CD4-positive, alpha-beta memory T cell (primary cell): ENCODE measurements at regions of chr10 and their contacts with region 1.

Region 1: DNA sequence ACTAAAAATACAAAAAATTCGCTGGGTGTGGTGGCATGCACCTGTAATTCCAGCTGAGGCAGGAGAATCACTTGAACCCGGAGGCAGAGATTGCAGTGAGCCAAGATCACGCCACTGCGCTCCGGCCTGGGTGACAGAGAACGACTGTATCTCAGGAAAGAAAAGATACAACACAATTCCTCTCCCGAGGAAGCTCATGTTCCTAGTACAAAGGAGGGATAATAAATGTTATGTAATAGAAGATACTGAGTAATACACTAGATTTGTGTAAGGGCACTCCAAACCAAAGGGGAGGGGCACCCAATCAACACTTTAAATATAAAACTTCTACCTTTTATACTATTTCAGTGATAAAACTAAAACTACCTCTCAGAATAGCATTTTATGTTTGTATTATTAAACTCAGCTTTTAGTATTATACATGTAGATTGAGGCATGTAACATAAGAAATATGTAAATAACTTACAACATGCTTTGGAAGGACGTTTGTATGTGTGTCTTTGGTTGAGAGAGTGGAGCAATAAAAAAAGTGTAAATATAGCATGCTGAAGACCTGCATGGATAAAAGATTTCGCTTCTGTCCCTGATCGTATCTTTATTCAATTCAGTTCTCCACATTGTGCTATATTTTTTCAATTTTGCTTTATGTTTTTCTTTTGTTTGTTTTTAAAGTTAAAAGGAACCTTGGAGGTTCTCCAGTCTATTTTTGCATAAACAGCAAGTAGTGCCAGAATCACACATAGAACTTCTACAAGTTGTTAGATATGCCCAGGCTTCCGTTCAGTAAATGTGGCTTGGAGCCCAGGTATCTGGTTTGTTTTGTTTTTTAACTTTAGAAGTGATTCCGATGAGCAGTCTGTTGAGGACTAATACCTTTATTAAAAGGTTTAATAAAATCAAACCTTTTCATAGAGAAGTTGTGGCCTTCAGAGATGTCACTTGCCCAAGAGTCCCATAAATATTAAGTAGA is 71.9 kb downstream of the WAC start:
- DNase-seq: no peak
- H3K4me3 ChIP-seq: no peak overlapping the region
- H3K4me3 Mint-ChIP-seq: no peak overlapping the region
- H3K27ac ChIP-seq: no peak overlapping the region
- H3K27ac Mint-ChIP-seq: peak overlapping the region in 2 of 7 donors; percentile 17 to 55
- H3K4me1 ChIP-seq: peaks cover 20% of the 10 kb centered on the region
- H3K4me1 Mint-ChIP-seq: peaks cover 29 to 66% (median 48%) of the 10 kb centered on the region in 4 donors
- H3K27me3 ChIP-seq: no peaks in the 10 kb centered on the region
- H3K27me3 Mint-ChIP-seq: no peaks in the 10 kb centered on the region

Region 2: DNA sequence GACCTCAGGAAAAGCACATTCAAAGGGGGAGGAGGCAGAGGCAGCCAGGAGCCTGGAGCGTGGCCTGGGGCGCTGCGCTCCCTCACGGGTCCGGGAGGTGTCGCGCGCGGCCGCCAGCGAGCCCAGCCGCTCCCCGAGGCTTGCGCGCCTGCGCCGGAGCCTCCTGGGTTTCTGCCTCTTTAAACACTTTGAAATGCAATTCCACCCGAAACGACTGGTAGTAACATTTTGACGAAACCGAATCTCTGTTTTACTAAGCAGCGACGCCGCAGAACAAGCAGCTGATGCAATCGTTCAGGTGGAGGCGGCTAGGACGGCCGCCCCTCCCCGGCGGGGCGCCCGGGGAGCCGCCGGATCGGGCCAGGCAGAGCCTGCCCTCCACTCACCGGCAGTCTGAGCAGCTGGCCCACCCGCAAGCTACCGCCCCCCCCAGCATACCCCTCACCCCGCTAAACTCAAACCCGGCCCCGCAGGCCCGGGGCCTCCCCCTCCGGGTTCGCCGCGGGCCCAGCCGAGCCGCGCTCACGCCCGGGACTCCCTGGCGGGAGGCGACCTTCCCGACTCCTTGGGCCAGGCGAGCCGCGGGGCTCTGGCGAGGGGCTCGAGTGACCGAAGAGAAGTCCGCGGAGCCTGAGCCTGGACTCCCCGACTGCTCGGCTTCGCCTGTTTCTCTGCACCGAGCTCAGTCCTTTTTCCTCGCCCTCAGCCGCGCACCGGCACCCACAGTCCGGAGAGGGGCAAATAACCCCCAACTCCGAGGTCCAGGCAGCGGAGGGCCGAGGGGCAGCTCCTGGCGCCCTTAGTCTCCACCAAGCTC is 862.4 kb before region 1 on chr10:
- CTCF ChIA-PET with region 1: no interaction called
- POLR2A ChIA-PET with region 1: no interaction called
- intact Hi-C with region 1: loop called (anchors 5 kb)
- DNase-seq: peak; percentile 77 to 82 (median 80)
- H3K4me3 ChIP-seq: peak overlapping the region; percentile 22 to 68
- H3K4me3 Mint-ChIP-seq: peak overlapping the region; percentile 82 to 96 (median 89)
- H3K27ac ChIP-seq: no peak overlapping the region
- H3K27ac Mint-ChIP-seq: peak overlapping the region in 1 of 7 donors; percentile 57
- H3K4me1 ChIP-seq: peaks cover 56% of the 10 kb centered on the region
- H3K4me1 Mint-ChIP-seq: peaks cover 23 to 47% (median 35%) of the 10 kb centered on the region in 4 donors
- H3K27me3 ChIP-seq: peaks cover 52% of the 10 kb centered on the region
- H3K27me3 Mint-ChIP-seq: peaks cover 45 to 48% of the 10 kb centered on the region in 2 donors

Region 3: DNA sequence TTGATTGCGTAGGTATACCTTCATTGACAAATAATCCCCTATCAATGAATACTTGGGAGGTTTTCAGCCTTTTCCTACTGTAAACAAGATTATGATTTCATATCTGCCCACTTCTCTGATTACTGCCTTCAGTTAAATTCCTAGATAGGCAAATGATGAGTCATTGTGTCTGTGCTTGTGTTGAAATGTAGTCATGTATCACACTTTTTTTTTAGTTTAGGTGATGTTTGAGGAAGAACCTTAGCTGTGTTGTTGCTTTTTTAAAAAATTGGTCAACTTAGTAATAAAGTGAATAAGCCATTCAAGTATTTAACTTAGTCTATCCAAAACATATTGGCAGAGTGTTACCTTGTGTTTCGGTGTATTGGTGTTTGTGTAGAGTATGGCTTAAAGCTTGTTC is 11.9 kb before region 1 on chr10:
- CTCF ChIA-PET with region 1: no interaction called
- POLR2A ChIA-PET with region 1: interaction called, 8 read pairs
- intact Hi-C with region 1: loop called (anchors 2 kb)
- DNase-seq: no peak
- H3K4me3 ChIP-seq: no peak overlapping the region
- H3K4me3 Mint-ChIP-seq: peak overlapping the region in 6 of 8 donors; percentile 10 to 61 (median 53)
- H3K27ac ChIP-seq: no peak overlapping the region
- H3K27ac Mint-ChIP-seq: peak overlapping the region in 5 of 7 donors; percentile 16 to 61 (median 57)
- H3K4me1 ChIP-seq: peaks cover 40% of the 10 kb centered on the region
- H3K4me1 Mint-ChIP-seq: peaks cover 35 to 71% (median 57%) of the 10 kb centered on the region in 4 donors
- H3K27me3 ChIP-seq: no peaks in the 10 kb centered on the region
- H3K27me3 Mint-ChIP-seq: no peaks in the 10 kb centered on the region

Region 4: GRCh38 chr10:28628184-28628893 is 23.5 kb after region 1 on chr10:
- CTCF ChIA-PET with region 1: interaction called, 11 read pairs
- POLR2A ChIA-PET with region 1: no interaction called
- intact Hi-C with region 1: no loop called
- DNase-seq: peak; percentile 37 to 52 (median 47)
- H3K4me3 ChIP-seq: no peak overlapping the region
- H3K4me3 Mint-ChIP-seq: peak overlapping the region in 1 of 8 donors; percentile 16
- H3K27ac ChIP-seq: no peak overlapping the region
- H3K27ac Mint-ChIP-seq: no peak overlapping the region
- H3K4me1 ChIP-seq: peaks cover 3% of the 10 kb centered on the region
- H3K4me1 Mint-ChIP-seq: peaks cover 8 to 24% (median 13%) of the 10 kb centered on the region in 4 donors
- H3K27me3 ChIP-seq: peaks cover 5% of the 10 kb centered on the region
- H3K27me3 Mint-ChIP-seq: peaks cover 11 to 20% of the 10 kb centered on the region in 2 donors

Region 5: DNA sequence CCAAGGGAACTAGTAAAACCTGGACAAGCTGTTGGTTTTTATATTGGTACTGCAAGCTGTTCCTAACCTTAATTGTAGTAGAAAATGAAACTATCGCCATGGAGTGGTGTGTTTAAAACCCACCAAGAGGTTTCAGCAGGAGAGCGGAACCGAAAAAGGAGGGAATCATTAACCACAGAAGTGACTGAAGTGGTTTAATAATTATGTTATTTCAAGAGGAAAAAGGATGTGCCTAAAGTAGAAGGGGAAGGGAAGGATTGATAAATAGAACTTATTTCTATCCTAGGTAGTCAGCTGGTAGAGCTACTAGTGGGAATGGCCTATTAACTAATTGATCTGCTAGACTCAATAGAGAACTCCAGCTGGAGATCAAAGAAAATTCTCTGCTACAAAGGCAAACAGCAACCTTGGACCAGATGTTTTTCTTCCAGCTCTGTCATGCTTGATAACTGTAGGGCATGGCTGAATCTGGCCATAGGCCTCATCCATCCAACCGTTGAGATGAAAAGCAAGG is 164.3 kb after region 1 on chr10:
- CTCF ChIA-PET with region 1: no interaction called
- POLR2A ChIA-PET with region 1: no interaction called
- intact Hi-C with region 1: no loop called
- DNase-seq: no peak
- H3K4me3 ChIP-seq: no peak overlapping the region
- H3K4me3 Mint-ChIP-seq: no peak overlapping the region
- H3K27ac ChIP-seq: no peak overlapping the region
- H3K27ac Mint-ChIP-seq: no peak overlapping the region
- H3K4me1 ChIP-seq: no peaks in the 10 kb centered on the region
- H3K4me1 Mint-ChIP-seq: no peaks in the 10 kb centered on the region
- H3K27me3 ChIP-seq: no peaks in the 10 kb centered on the region
- H3K27me3 Mint-ChIP-seq: peaks cover 4 to 16% of the 10 kb centered on the region in 2 donors